ENCODE measurements at regions of chr1 and their contacts with region 1.

Region 1: GRCh38 chr1:10065344-10065685 is 32.6 kb downstream of the UBE4B start:
- DNase-seq: no peak
- H3K4me3 ChIP-seq: no peak overlapping the region
- H3K27ac ChIP-seq: peak overlapping the region; percentile 5 to 87 (median 24)
- H3K4me1 ChIP-seq: peaks cover 38 to 71% (median 67%) of the 10 kb centered on the region in 4 donors
- H3K27me3 ChIP-seq: no peaks in the 10 kb centered on the region
- CTCF ChIP-seq: no peak
- EP300 ChIP-seq: no peak
- POLR2A ChIP-seq: no peak

Region 2: DNA sequence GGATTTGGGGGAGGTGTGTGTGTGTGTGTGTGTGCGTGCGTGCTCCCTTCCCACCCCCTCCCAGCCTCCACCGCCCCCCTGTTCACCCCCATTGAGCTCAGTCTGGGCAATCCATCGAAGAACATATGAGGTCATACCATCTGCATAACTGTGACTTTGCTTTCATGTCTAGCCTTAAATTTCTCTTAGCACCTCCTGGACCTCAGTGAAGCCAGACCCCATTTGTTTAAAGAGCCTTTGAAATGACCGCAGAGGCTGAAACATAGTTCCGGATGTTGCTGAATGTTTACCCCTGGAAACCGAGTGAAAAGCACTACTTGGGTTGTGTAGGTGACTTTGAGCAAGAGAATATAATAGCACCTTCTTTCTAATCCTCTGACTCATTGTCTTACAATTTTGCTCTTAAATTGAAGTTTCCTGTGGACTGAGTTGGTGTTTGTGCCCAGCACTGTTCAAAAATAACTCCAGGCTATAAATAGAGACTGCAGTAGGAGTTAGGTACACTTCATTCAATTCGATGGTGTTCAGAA is 42.9 kb after region 1 on chr1:
- intact Hi-C with region 1: no loop called
- DNase-seq: no peak
- H3K4me3 ChIP-seq: peak overlapping the region in 3 of 4 donors; percentile 5 to 17 (median 11)
- H3K27ac ChIP-seq: peak overlapping the region; percentile 82 to 90 (median 84)
- H3K4me1 ChIP-seq: peaks cover 29 to 56% (median 46%) of the 10 kb centered on the region in 4 donors
- H3K27me3 ChIP-seq: no peaks in the 10 kb centered on the region
- CTCF ChIP-seq: no peak
- EP300 ChIP-seq: no peak
- POLR2A ChIP-seq: no peak

Region 3: GRCh38 chr1:10128101-10128765 is 62.9 kb after region 1 on chr1:
- intact Hi-C with region 1: loop called (anchors 10 kb)
- DNase-seq: no peak
- H3K4me3 ChIP-seq: no peak overlapping the region
- H3K27ac ChIP-seq: peak overlapping the region; percentile 3 to 57 (median 30)
- H3K4me1 ChIP-seq: peaks cover 0 to 22% (median 16%) of the 10 kb centered on the region in 4 donors
- H3K27me3 ChIP-seq: no peaks in the 10 kb centered on the region
- CTCF ChIP-seq: no peak
- EP300 ChIP-seq: no peak
- POLR2A ChIP-seq: no peak